Activated CD4-positive, alpha-beta T cell treated with anti-CD3 and anti-CD28 coated beads, Interleukin-2, amount 10 ng/mL, durations not matched to agents 7 days and 5 days (primary cell): ENCODE measurements at regions of chr1 and their contacts with region 1.

Region 1: GRCh38 chr1:192539297-192540092 is 36.1 kb upstream of the RGS1 start:
- DNase-seq: no peak
- H3K4me3 Mint-ChIP-seq: peak overlapping the region; percentile 3
- H3K27ac Mint-ChIP-seq: peak overlapping the region; percentile 91
- H3K4me1 Mint-ChIP-seq: peaks cover 50% of the 10 kb centered on the region
- H3K27me3 Mint-ChIP-seq: no peaks in the 10 kb centered on the region

Region 2: GRCh38 chr1:192550922-192551534 is 11.5 kb after region 1 on chr1:
- CTCF ChIA-PET with region 1: interaction called, 23 read pairs
- POLR2A ChIA-PET with region 1: interaction called, 3 read pairs
- DNase-seq: no peak
- H3K4me3 Mint-ChIP-seq: no peak overlapping the region
- H3K27ac Mint-ChIP-seq: peak overlapping the region; percentile 17
- H3K4me1 Mint-ChIP-seq: peaks cover 40% of the 10 kb centered on the region
- H3K27me3 Mint-ChIP-seq: no peaks in the 10 kb centered on the region